ENCODE measurements at regions of chr16 and their contacts with region 1.

Region 1: GRCh38 chr16:4288148-4288921 is 15.5 kb upstream of the TFAP4 start:
- DNase-seq: peak; percentile 93
- H3K4me3 Mint-ChIP-seq: no peak overlapping the region
- H3K27ac Mint-ChIP-seq: peak overlapping the region; percentile 30
- H3K4me1 Mint-ChIP-seq: peaks cover 42% of the 10 kb centered on the region
- H3K27me3 Mint-ChIP-seq: no peaks in the 10 kb centered on the region
- CTCF ChIP-seq: peak; percentile 96

Region 2: GRCh38 chr16:4046221-4046620 is 242.1 kb before region 1 on chr16:
- CTCF ChIA-PET with region 1: interaction called, 22 read pairs
- intact Hi-C with region 1: no loop called
- DNase-seq: no peak
- H3K4me3 Mint-ChIP-seq: no peak overlapping the region
- H3K27ac Mint-ChIP-seq: no peak overlapping the region
- H3K4me1 Mint-ChIP-seq: peaks cover 10% of the 10 kb centered on the region
- H3K27me3 Mint-ChIP-seq: no peaks in the 10 kb centered on the region
- CTCF ChIP-seq: no peak

Region 3: DNA sequence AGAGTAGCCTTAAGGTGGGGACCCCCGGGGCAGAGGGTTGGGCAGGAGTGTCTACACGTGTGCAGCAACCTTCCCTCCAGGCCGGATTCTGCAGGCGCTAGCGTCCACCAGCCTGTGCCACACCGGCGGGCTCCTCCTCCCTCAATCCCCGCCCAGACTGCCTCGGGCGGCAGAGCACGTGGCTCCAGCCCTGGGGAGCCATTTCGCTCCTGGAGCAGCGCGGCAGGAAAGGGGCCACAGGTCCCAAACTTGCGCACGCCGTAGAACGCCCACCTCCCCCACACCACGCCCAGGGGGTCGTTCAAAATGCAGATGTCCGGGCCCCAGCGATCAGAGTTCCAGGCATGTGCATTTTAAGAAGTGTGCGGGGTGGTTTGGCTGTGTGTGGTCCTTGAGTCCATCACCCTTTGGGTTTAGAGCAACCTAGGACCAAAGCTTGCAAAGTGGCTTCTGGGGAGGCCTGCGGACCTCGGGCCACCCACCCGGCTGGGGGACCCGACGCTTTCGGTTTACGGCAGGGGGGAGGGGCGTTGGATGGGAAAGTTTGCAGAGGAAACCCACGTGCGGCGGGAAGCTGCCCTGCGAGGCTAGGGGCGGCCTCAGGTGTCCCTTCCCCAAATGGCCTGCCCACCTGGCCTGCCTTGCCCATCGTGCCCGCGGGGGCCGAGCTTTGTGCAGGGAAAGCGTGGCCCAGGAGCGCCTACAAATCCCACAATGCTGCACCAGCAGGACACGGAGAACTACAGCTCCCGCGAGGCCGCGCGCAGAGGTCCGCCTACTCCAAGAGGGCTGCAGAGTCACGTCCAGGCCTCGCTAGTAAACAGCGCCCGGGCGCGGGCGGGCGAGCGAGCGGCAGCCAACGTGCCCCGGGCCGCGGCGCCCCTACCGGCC is 16.9 kb before region 1 on chr16:
- CTCF ChIA-PET with region 1: interaction called, 28 read pairs
- intact Hi-C with region 1: no loop called
- DNase-seq: peak; percentile 96
- H3K4me3 Mint-ChIP-seq: peak overlapping the region; percentile 83
- H3K27ac Mint-ChIP-seq: peak overlapping the region; percentile 92
- H3K4me1 Mint-ChIP-seq: no peaks in the 10 kb centered on the region
- H3K27me3 Mint-ChIP-seq: no peaks in the 10 kb centered on the region
- CTCF ChIP-seq: no peak

Region 4: GRCh38 chr16:4309836-4310266 is 21.5 kb after region 1 on chr16:
- CTCF ChIA-PET with region 1: interaction called, 15 read pairs
- intact Hi-C with region 1: no loop called
- DNase-seq: peak; percentile 91
- H3K4me3 Mint-ChIP-seq: no peak overlapping the region
- H3K27ac Mint-ChIP-seq: no peak overlapping the region
- H3K4me1 Mint-ChIP-seq: peaks cover 34% of the 10 kb centered on the region
- H3K27me3 Mint-ChIP-seq: no peaks in the 10 kb centered on the region
- CTCF ChIP-seq: peak; percentile 84

Region 5: GRCh38 chr16:4323845-4324478 is 35.6 kb after region 1 on chr16:
- CTCF ChIA-PET with region 1: interaction called, 89 read pairs
- intact Hi-C with region 1: no loop called
- DNase-seq: peak; percentile 66
- H3K4me3 Mint-ChIP-seq: peak overlapping the region; percentile 17
- H3K27ac Mint-ChIP-seq: no peak overlapping the region
- H3K4me1 Mint-ChIP-seq: peaks cover 8% of the 10 kb centered on the region
- H3K27me3 Mint-ChIP-seq: no peaks in the 10 kb centered on the region
- CTCF ChIP-seq: no peak

Measured in Calu3 (cell line).